SK-N-SH (cell line): ENCODE measurements at regions of chr10 and their contacts with region 1.

Region 1: GRCh38 chr10:95601116-95601719 is 40.0 kb upstream of the SORBS1 start:
- DNase-seq: peak; percentile 80
- H3K4me3 ChIP-seq: peak overlapping the region in 1 of 2 experiments; percentile 13; a peak in 1 of 4 replicates
- H3K27ac ChIP-seq: no peak overlapping the region
- H3K4me1 ChIP-seq: no peaks in the 10 kb centered on the region
- H3K27me3 ChIP-seq: no peaks in the 10 kb centered on the region
- CTCF ChIP-seq: peak; percentile 96
- EP300 ChIP-seq: no peak
- RAD21 ChIP-seq: peak; percentile 98

Region 2: DNA sequence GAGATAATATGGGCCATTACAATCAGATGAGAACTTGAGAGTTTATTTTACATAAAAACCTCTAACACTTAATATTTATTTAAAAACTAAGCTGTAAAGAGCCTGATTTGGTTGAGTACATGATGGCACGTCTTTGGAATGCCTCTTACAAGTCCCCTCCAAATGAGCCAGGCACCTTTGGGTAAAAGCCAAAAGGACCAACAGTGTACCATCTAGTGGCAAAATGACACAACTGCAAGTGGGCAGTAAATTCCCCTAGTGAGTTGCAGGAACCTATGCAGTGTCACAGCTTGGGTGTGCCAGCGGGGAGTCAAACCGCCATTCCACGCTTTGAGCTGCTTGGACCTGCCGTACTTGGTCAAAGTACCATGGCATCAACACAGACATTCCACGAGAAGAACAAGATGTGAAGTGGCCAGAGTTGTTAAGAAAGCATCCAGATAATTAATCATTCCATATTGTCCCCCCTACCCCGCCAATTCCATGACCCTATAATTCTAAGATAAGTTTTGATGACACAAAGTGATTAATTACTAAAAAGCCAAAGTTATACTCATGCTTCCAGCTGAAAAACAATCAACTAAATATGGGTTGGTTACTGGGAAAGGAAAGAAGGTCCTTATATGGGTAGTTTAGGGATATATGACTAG is 155.3 kb before region 1 on chr10:
- CTCF ChIA-PET with region 1: interaction called, 33 read pairs
- POLR2A ChIA-PET with region 1: no interaction called
- DNase-seq: peak; percentile 67
- H3K4me3 ChIP-seq: no peak overlapping the region
- H3K27ac ChIP-seq: 0 out of 4 replicates have a peak overlapping the region, but pooled peaks of 1 of the 2 experiments have one; percentile 16
- H3K4me1 ChIP-seq: peaks cover 4% of the 10 kb centered on the region in 2 experiments; a peak in 2 of 4 replicates
- H3K27me3 ChIP-seq: no peaks in the 10 kb centered on the region
- CTCF ChIP-seq: peak; percentile 81
- EP300 ChIP-seq: no peak
- RAD21 ChIP-seq: peak; percentile 64

Region 3: DNA sequence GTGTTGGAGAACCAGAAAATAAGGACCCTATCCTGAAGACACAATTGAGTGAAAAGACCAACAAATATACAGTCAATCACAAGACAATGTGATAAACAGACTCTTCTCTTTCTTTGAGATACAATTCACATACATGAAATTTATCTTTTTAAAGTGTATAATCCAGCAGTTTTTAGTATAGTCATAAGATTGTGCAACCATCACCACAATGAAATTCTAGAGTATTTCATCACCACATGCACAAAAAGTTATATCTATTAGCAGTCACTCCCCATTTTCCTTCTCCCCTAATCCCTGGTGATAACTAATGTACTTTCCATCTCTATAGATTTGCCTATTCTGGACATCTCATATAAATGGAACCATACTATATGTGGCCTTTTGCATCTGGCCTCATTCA is 31.9 kb before region 1 on chr10:
- CTCF ChIA-PET with region 1: no interaction called
- POLR2A ChIA-PET with region 1: no interaction called
- DNase-seq: no peak
- H3K4me3 ChIP-seq: no peak overlapping the region
- H3K27ac ChIP-seq: no peak overlapping the region
- H3K4me1 ChIP-seq: peaks cover 0 to 4% of the 10 kb centered on the region in 2 experiments; a peak in 1 of 4 replicates
- H3K27me3 ChIP-seq: no peaks in the 10 kb centered on the region
- CTCF ChIP-seq: no peak
- EP300 ChIP-seq: no peak
- RAD21 ChIP-seq: no peak

Region 4: GRCh38 chr10:95588025-95588424 is 13.2 kb before region 1 on chr10:
- CTCF ChIA-PET with region 1: interaction called, 16 read pairs
- POLR2A ChIA-PET with region 1: no interaction called
- DNase-seq: no peak
- H3K4me3 ChIP-seq: no peak overlapping the region
- H3K27ac ChIP-seq: no peak overlapping the region
- H3K4me1 ChIP-seq: no peaks in the 10 kb centered on the region
- H3K27me3 ChIP-seq: no peaks in the 10 kb centered on the region; the same call in 1 of the 2 replicates
- CTCF ChIP-seq: no peak
- EP300 ChIP-seq: no peak
- RAD21 ChIP-seq: no peak